AG04450 (cell line): ENCODE measurements at regions of chr20 and their contacts with region 1.

Region 1: GRCh38 chr20:14337400-14338171 is at the start of gene FLRT3:
- DNase-seq: peak; percentile 96
- H3K4me3 ChIP-seq: peak within 1 kb of the TSS; percentile 63
- H3K27ac ChIP-seq: peak within 1 kb of the TSS; percentile 43
- H3K27me3 ChIP-seq: no peaks in the 10 kb centered on the region
- CTCF ChIP-seq: peak; percentile 87
- polyA plus RNA-seq, gene FLRT3: 2.2 and 3.0 TPM in 2 replicates

Region 2: DNA sequence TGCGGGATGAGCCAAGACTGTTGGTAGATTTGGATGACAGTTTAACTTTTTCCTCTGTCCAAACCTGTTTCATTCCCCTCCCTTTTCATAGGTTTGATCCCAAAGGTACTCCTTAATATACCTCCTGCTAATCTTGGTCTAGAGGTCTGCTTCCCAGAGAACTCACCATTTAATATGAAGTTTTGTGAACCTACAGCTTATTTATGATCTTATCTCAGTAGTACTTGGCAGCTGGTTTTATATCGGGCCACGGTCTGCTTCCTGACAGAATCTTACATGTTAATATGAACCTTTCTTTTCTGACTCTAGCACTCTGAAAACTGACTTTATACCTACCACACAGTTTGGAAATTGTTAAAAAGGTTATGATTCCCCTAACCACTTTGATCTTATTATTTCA is 203.6 kb before region 1 on chr20:
- CTCF ChIA-PET with region 1: interaction called, 10 read pairs
- POLR2A ChIA-PET with region 1: no interaction called
- DNase-seq: no peak
- H3K4me3 ChIP-seq: no peak overlapping the region
- H3K27ac ChIP-seq: no peak overlapping the region
- H3K27me3 ChIP-seq: no peaks in the 10 kb centered on the region
- CTCF ChIP-seq: no peak

Region 3: DNA sequence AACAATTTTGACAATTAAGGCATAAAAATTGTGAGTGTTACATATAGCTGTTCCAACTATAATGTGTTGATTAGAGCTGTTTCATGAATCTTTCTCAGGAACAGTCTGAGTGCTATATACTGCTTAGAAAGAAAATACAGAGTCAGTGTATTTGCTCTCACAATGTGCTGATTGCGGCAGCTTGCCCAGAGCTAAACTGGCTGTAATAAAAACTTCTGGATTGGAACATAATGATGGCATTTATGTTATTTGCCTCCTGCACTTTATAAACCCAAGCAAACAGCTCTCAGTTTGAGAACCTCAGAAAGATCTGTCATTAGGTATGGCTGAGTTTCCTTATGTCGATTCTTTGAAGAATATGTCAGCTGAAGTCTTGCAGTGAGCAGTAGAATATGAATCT is 29.6 kb before region 1 on chr20:
- CTCF ChIA-PET with region 1: no interaction called
- POLR2A ChIA-PET with region 1: no interaction called
- DNase-seq: no peak
- H3K4me3 ChIP-seq: no peak overlapping the region
- H3K27ac ChIP-seq: no peak overlapping the region
- H3K27me3 ChIP-seq: no peaks in the 10 kb centered on the region
- CTCF ChIP-seq: no peak

Region 4: GRCh38 chr20:14319704-14320103 is 17.9 kb before region 1 on chr20:
- CTCF ChIA-PET with region 1: interaction called, 10 read pairs
- POLR2A ChIA-PET with region 1: no interaction called
- DNase-seq: no peak
- H3K4me3 ChIP-seq: no peak overlapping the region
- H3K27ac ChIP-seq: no peak overlapping the region
- H3K27me3 ChIP-seq: no peaks in the 10 kb centered on the region
- CTCF ChIP-seq: no peak

Region 5: DNA sequence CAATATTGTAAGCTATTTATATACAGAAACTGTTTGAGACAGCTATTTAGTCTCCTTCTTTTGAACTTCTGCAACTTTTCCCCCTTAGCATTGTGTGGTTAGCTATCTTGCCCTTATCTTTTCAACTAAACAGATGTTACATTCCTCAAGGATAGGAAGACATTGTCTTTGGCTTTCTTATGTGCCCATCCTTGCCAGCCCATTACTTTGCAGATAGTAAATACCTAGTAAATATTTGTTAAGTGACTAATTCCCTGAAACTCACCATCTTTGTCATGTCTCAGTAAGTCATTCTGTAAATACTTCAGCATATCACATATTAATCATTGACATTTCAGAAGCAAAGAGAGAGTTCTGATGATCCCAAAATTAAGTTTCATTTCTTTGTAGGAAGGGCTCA is 68.9 kb after region 1 on chr20:
- CTCF ChIA-PET with region 1: interaction called, 12 read pairs
- POLR2A ChIA-PET with region 1: no interaction called
- DNase-seq: no peak
- H3K4me3 ChIP-seq: no peak overlapping the region
- H3K27ac ChIP-seq: no peak overlapping the region
- H3K27me3 ChIP-seq: no peaks in the 10 kb centered on the region
- CTCF ChIP-seq: no peak

Region 6: GRCh38 chr20:14568225-14568624 is 230.6 kb after region 1 on chr20:
- CTCF ChIA-PET with region 1: interaction called, 72 read pairs
- POLR2A ChIA-PET with region 1: no interaction called
- DNase-seq: no peak
- H3K4me3 ChIP-seq: no peak overlapping the region
- H3K27ac ChIP-seq: no peak overlapping the region
- H3K27me3 ChIP-seq: no peaks in the 10 kb centered on the region
- CTCF ChIP-seq: no peak